Spleen (tissue), 13 donors: ENCODE measurements at regions of chr1 and their contacts with region 1.

Region 1: GRCh38 chr1:23916209-23917131 is 3.3 kb upstream of the CNR2 start:
- DNase-seq: peak; percentile 89
- H3K4me3 ChIP-seq: peak overlapping the region in 1 of 8 donors; percentile 1
- H3K27ac ChIP-seq: peak overlapping the region in 7 of 8 donors; percentile 29 to 80 (median 63)
- H3K4me1 ChIP-seq: peaks cover 12 to 71% (median 44%) of the 10 kb centered on the region in 6 donors
- H3K27me3 ChIP-seq: no peaks in the 10 kb centered on the region
- CTCF ChIP-seq: peak; percentile 49 to 83 (median 73)
- POLR2A ChIP-seq: no peak

Region 2: DNA sequence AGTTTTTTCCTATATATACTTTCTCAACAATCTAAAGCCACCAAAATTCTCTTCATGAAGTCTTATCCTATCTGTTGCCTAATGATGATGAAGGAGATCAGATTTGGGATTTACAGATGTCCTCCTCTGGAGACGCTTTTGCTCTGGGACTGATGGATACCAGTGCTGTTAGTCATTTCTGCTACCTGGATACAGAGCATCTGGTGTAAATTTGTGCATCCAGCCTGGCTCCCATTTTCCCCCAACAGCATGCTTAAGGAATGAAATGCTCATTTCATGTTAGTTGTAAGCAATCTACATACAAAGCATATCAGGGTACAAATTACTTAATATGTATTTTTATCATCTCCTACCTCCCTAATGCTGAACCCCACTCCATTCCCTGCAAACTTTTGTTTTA is 630.1 kb before region 1 on chr1:
- intact Hi-C with region 1: no loop called
- DNase-seq: no peak
- H3K4me3 ChIP-seq: no peak overlapping the region
- H3K27ac ChIP-seq: no peak overlapping the region
- H3K4me1 ChIP-seq: peaks cover 0 to 21% (median 2%) of the 10 kb centered on the region in 6 donors
- H3K27me3 ChIP-seq: no peaks in the 10 kb centered on the region
- CTCF ChIP-seq: no peak
- POLR2A ChIP-seq: no peak

Region 3: DNA sequence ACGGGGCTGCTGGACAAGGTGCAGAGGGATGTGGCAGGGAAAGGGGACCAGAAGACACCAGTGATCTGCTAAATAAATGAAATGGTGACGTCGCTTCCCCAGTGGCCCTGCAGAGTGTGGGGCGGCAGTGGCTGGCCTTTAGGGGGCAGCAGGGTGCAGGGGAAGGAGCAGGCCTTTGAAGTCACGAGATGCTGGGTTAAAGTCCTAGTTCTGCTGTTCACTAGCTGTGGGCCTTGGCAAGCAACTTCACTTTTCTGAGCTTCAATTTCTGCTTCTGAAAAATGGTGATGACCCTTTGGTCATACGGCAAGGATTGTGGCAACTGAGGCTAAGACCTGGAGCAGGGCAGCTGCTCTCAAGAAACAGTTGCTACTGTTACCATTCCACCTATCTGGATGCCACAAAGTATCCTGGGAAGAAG is 106.7 kb before region 1 on chr1:
- intact Hi-C with region 1: loop called (anchors 5 kb)
- DNase-seq: peak; percentile 93
- H3K4me3 ChIP-seq: no peak overlapping the region
- H3K27ac ChIP-seq: peak overlapping the region; percentile 0 to 77 (median 56)
- H3K4me1 ChIP-seq: peaks cover 0 to 42% (median 26%) of the 10 kb centered on the region in 6 donors
- H3K27me3 ChIP-seq: no peaks in the 10 kb centered on the region
- CTCF ChIP-seq: peak; percentile 81 to 96 (median 88)
- POLR2A ChIP-seq: no peak